Activated naive CD4-positive, alpha-beta T cell treated with anti-CD3 and anti-CD28 coated beads for 36 hours (primary cell): ENCODE measurements at regions of chr13 and their contacts with region 1.

Region 1: DNA sequence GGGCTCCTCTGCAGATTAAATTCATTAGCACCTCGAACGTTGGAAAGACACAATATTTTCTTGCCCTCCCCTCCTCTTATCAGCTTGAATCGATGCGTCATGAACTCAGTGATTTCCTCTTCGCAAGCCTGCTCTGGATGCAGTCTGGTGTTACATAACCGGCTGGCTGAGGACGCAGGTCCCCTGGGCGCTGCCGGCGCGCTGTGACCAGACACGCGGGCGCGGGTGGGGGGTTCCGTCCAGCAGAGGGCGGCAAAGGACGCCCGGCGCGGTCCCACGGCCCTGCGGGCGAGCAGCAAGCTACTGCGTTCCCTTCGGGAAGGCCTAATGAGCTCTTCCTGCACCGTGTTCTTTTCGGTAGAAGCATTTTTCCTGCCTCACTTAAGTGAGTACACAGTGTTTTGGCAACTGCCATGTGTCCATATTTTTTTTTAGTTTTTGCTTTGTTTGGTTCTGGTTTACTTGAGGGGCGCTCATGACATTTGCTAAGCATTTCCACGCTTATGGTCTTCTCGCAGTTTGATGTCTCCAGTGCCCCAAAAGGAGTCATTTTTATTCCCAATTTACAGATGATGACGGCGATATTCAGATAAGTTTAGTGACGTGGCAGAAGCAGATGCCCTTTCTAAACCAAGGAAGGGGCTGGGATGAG is 112.2 kb upstream of the MBNL2 start:
- DNase-seq: peak; percentile 79
- H3K4me3 Mint-ChIP-seq: peak overlapping the region; percentile 14
- H3K27ac Mint-ChIP-seq: no peak overlapping the region
- H3K4me1 Mint-ChIP-seq: peaks cover 11% of the 10 kb centered on the region
- H3K27me3 Mint-ChIP-seq: peaks cover 12% of the 10 kb centered on the region

Region 2: GRCh38 chr13:97212601-97213040 is 102.7 kb after region 1 on chr13:
- CTCF ChIA-PET with region 1: interaction called, 13 read pairs
- intact Hi-C with region 1: loop called (anchors 1 kb)
- DNase-seq: peak; percentile 33
- H3K4me3 Mint-ChIP-seq: no peak overlapping the region
- H3K27ac Mint-ChIP-seq: no peak overlapping the region
- H3K4me1 Mint-ChIP-seq: peaks cover 38% of the 10 kb centered on the region
- H3K27me3 Mint-ChIP-seq: no peaks in the 10 kb centered on the region

Region 3: GRCh38 chr13:97344265-97345175 is 234.6 kb after region 1 on chr13:
- CTCF ChIA-PET with region 1: interaction called, 86 read pairs
- intact Hi-C with region 1: loop called (anchors 1 kb)
- DNase-seq: peak; percentile 72
- H3K4me3 Mint-ChIP-seq: no peak overlapping the region
- H3K27ac Mint-ChIP-seq: no peak overlapping the region
- H3K4me1 Mint-ChIP-seq: peaks cover 6% of the 10 kb centered on the region
- H3K27me3 Mint-ChIP-seq: no peaks in the 10 kb centered on the region

Region 4: GRCh38 chr13:97367016-97367822 is 257.3 kb after region 1 on chr13:
- CTCF ChIA-PET with region 1: interaction called, 132 read pairs
- intact Hi-C with region 1: no loop called
- DNase-seq: no peak
- H3K4me3 Mint-ChIP-seq: no peak overlapping the region
- H3K27ac Mint-ChIP-seq: no peak overlapping the region
- H3K4me1 Mint-ChIP-seq: peaks cover 10% of the 10 kb centered on the region
- H3K27me3 Mint-ChIP-seq: no peaks in the 10 kb centered on the region

Region 5: GRCh38 chr13:97798836-97799235 is 688.9 kb after region 1 on chr13:
- CTCF ChIA-PET with region 1: no interaction called
- intact Hi-C with region 1: loop called (anchors 2 kb)
- DNase-seq: no peak
- H3K4me3 Mint-ChIP-seq: no peak overlapping the region
- H3K27ac Mint-ChIP-seq: no peak overlapping the region
- H3K4me1 Mint-ChIP-seq: no peaks in the 10 kb centered on the region
- H3K27me3 Mint-ChIP-seq: peaks cover 21% of the 10 kb centered on the region